ENCODE measurements at regions of chr3 and their contacts with region 1.

Region 1: GRCh38 chr3:45398178-45398577 is 9.8 kb downstream of the LARS2 start:
- DNase-seq: no peak

Region 2: GRCh38 chr3:45258317-45258716 is 139.9 kb before region 1 on chr3:
- intact Hi-C with region 1: loop called in 1 of 2 experiments (anchors 10 kb)
- DNase-seq: no peak

Measured in posterior vena cava (tissue), 2 donors.